CD8-positive, alpha-beta T cell (primary cell): ENCODE measurements at regions of chr6 and their contacts with region 1.

Region 1: DNA sequence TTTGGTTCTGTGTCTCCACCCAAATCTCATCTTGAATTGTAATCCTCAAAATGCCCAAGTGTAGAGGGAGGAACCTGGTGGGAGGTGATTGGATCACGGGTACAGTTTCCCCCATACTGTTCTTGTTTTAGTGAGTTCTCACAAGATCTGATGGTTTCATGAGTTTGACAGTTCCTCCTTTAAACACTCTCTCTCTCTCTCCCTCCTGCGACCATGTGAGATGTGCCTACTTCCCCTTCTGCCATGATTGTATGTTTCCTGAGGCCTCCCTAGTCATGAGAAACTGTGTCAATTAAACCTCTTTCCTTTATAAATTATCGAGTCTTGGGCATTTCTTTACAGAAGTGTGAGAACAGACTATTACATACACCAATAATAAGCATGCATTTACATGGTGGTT is 12.1 kb upstream of the EYS start:
- DNase-seq: no peak
- ATAC-seq: no peak
- H3K4me3 ChIP-seq: no peak overlapping the region
- H3K4me3 Mint-ChIP-seq: no peak overlapping the region
- H3K27ac ChIP-seq: no peak overlapping the region
- H3K27ac Mint-ChIP-seq: no peak overlapping the region
- H3K4me1 ChIP-seq: no peaks in the 10 kb centered on the region
- H3K4me1 Mint-ChIP-seq: no peaks in the 10 kb centered on the region
- H3K27me3 ChIP-seq: no peaks in the 10 kb centered on the region
- H3K27me3 Mint-ChIP-seq: no peaks in the 10 kb centered on the region
- CTCF ChIP-seq: no peak

Region 2: DNA sequence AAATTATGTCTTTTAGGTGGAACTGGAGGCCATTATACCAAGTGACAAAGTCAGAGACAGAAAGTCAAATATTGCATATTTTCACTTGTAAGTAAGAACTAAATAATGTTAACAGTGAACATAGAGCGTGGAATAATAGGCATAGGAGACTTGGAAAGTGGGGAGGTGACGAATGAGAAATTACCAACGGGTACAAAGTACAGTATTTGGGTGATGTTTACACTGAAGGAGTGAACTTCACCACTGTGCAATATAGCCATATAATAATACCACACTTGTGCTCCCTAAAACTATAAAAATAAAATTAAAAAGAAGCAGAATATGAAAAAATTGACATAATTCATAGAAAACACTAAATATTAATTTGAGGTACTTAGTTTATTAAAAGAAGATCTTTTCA is 27.0 kb before region 1 on chr6:
- CTCF ChIA-PET with region 1: no interaction called
- POLR2A ChIA-PET with region 1: no interaction called
- intact Hi-C with region 1: no loop called
- DNase-seq: no peak
- ATAC-seq: no peak
- H3K4me3 ChIP-seq: no peak overlapping the region
- H3K4me3 Mint-ChIP-seq: no peak overlapping the region
- H3K27ac ChIP-seq: no peak overlapping the region
- H3K27ac Mint-ChIP-seq: no peak overlapping the region
- H3K4me1 ChIP-seq: no peaks in the 10 kb centered on the region
- H3K4me1 Mint-ChIP-seq: no peaks in the 10 kb centered on the region
- H3K27me3 ChIP-seq: no peaks in the 10 kb centered on the region
- H3K27me3 Mint-ChIP-seq: no peaks in the 10 kb centered on the region
- CTCF ChIP-seq: no peak

Region 3: DNA sequence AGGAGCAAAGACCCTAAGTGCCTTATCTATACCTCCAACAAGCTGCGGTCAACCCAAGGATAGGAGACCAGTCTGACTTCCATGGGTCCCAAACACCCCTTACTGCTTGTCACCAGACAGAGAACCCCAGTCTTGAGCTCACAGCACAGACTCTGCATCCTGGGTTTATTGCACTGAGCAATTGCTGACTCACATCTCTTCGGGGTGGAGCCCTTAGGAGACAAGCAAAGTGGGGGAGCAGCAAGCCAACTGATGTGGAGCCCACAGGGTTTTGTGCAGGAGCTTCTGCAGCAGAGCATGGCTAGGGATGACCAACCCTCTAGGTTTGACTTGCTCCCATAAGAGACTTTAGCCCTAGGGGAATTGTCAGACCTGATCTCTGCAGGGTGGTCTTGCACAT is 26.5 kb after region 1 on chr6:
- CTCF ChIA-PET with region 1: no interaction called
- POLR2A ChIA-PET with region 1: no interaction called
- intact Hi-C with region 1: no loop called
- DNase-seq: no peak
- ATAC-seq: no peak
- H3K4me3 ChIP-seq: no peak overlapping the region
- H3K4me3 Mint-ChIP-seq: no peak overlapping the region
- H3K27ac ChIP-seq: no peak overlapping the region
- H3K27ac Mint-ChIP-seq: no peak overlapping the region
- H3K4me1 ChIP-seq: no peaks in the 10 kb centered on the region
- H3K4me1 Mint-ChIP-seq: no peaks in the 10 kb centered on the region
- H3K27me3 ChIP-seq: no peaks in the 10 kb centered on the region
- H3K27me3 Mint-ChIP-seq: no peaks in the 10 kb centered on the region
- CTCF ChIP-seq: no peak

Region 4: GRCh38 chr6:66740346-66740745 is 1021.2 kb after region 1 on chr6:
- CTCF ChIA-PET with region 1: no interaction called
- POLR2A ChIA-PET with region 1: no interaction called
- intact Hi-C with region 1: loop called in 1 of 2 experiments (anchors 5 kb)
- DNase-seq: no peak
- ATAC-seq: no peak
- H3K4me3 ChIP-seq: no peak overlapping the region
- H3K4me3 Mint-ChIP-seq: no peak overlapping the region
- H3K27ac ChIP-seq: no peak overlapping the region
- H3K27ac Mint-ChIP-seq: no peak overlapping the region
- H3K4me1 ChIP-seq: no peaks in the 10 kb centered on the region
- H3K4me1 Mint-ChIP-seq: no peaks in the 10 kb centered on the region
- H3K27me3 ChIP-seq: no peaks in the 10 kb centered on the region
- H3K27me3 Mint-ChIP-seq: no peaks in the 10 kb centered on the region
- CTCF ChIP-seq: no peak